ENCODE measurements at regions of chr6 and their contacts with region 1.

Region 1: GRCh38 chr6:137155830-137156229 is 17.6 kb downstream of the IL22RA2 start:
- DNase-seq: peak; percentile 44
- H3K4me3 Mint-ChIP-seq: peak overlapping the region; percentile 28
- H3K27ac Mint-ChIP-seq: peak overlapping the region; percentile 15
- H3K4me1 Mint-ChIP-seq: peaks cover 19% of the 10 kb centered on the region
- H3K27me3 Mint-ChIP-seq: peaks cover 12% of the 10 kb centered on the region

Region 2: DNA sequence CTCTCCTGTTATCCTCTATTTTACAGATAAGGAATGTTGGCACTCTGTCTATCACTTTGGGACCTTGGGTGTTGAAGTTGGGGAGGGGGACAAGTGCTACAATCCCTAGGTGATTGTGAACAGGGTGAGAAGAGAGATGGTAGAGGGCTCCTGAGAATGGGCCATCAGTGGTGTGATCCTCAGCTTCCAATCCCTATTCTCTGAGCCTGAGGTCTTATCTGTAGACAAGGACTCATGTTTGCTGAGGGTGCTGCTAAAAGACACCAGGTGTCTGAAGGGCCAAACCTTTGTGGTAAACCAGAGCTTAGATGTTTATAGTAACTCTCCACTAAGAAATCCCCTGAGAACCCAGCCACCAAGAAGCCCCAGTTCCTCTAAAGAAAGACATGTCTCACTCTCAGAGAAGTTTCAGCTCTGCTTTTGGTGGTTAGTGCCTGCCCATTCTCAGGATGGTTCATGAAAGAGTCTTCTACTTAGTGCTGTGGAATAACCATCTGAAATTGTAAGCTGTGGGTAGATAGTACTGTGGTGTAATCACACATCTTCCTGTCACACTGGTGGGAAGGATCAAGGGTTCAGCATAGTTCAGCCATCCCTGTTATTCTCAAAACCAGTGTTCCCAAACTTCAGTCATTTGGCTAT is 52.9 kb before region 1 on chr6:
- intact Hi-C with region 1: loop called (anchors 5 kb)
- DNase-seq: no peak
- H3K4me3 Mint-ChIP-seq: no peak overlapping the region
- H3K27ac Mint-ChIP-seq: no peak overlapping the region
- H3K4me1 Mint-ChIP-seq: peaks cover 15% of the 10 kb centered on the region
- H3K27me3 Mint-ChIP-seq: no peaks in the 10 kb centered on the region

Region 3: DNA sequence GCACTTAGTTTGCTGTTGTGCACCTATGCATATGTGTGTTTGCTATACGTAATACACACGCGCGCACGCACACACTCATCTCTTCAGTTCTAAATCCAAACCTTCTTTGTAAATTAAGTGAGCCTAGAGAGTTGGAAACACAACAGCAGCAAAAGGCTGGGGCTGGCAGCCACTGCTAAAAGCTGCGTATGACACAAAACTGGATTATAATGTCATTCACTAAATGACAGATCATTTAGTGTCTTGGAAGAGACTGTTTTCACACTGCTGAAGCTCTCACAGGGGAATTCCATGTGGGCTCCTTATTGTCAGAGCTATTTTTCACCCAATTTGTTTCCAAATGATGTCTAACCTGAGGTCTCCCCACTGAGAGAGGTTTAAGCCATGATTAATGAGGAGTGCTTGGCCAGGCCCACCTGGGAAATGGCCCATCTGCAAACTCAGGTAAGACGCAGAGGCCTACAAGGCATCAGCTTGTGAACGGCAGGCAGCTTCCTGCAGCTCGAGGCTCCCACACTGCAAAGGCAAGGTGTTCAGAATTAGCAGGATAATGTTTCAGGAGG is 244.1 kb after region 1 on chr6:
- intact Hi-C with region 1: no loop called
- DNase-seq: no peak
- H3K4me3 Mint-ChIP-seq: no peak overlapping the region
- H3K27ac Mint-ChIP-seq: no peak overlapping the region
- H3K4me1 Mint-ChIP-seq: peaks cover 15% of the 10 kb centered on the region
- H3K27me3 Mint-ChIP-seq: peaks cover 2% of the 10 kb centered on the region